Body of pancreas (tissue), 4 donors: ENCODE measurements at regions of chr22 and their contacts with region 1.

Region 1: GRCh38 chr22:37588546-37589215 is 8.8 kb upstream of the LGALS2 start:
- DNase-seq: peak in 1 of 4 donors; percentile 53
- ATAC-seq: peak; percentile 21
- H3K4me3 ChIP-seq: no peak overlapping the region
- H3K27ac ChIP-seq: peak overlapping the region; percentile 45 to 85 (median 61)
- H3K4me1 ChIP-seq: peaks cover 41% of the 10 kb centered on the region
- H3K27me3 ChIP-seq: no peaks in the 10 kb centered on the region
- CTCF ChIP-seq: no peak
- POLR2A ChIP-seq: no peak

Region 2: GRCh38 chr22:37544955-37545699 is 43.6 kb before region 1 on chr22:
- intact Hi-C with region 1: loop called (anchors 5 kb)
- DNase-seq: peak; percentile 90 to 92 (median 91)
- ATAC-seq: peak; percentile 67
- H3K4me3 ChIP-seq: no peak overlapping the region
- H3K27ac ChIP-seq: peak overlapping the region; percentile 89 to 96 (median 94)
- H3K4me1 ChIP-seq: peaks cover 78% of the 10 kb centered on the region
- H3K27me3 ChIP-seq: no peaks in the 10 kb centered on the region
- CTCF ChIP-seq: peak; percentile 50 to 98 (median 93)
- POLR2A ChIP-seq: no peak